HEK293T (cell line): ENCODE measurements at regions of chr7 and their contacts with region 1.

Region 1: DNA sequence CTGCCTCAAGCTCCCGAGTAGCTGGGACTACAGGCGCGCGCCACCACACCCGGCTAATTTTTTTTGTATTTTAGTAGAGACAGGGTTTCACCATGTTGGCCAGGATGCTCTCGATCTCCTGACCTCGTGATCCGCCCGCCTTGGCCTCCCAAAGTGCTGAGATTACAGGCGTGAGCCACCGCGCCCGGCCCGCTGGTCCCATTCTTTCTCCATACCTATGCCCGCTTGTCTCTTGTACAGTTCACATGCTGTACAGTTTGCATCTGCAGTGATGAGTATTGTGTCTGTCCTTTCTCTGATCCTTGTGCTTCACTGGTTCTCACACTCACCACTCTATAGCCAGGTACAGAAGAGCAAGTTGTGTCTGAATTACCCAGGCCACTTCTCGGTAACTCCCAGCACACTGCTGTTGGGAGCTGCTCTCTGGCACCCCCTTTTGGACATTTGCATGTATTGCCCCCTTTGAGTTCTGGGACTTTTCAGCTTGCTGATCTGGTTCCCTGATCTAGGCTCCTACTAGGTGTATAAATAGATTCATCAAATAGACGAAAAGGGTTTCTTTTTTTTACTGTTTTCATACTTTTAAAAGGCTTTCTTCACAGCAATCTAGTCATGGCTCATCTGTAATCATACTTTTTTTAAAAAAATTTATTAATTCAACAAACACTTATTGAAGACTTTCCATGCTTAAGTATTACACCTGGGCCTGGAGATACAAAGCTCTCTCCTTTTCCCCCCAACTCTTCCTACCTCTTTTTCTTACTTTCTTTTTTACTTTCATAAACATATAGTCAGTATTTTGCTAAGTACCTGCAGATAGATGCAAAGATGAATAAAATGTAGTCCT is 53.5 kb downstream of the AOAH start:
- DNase-seq: peak; percentile 73

Region 2: GRCh38 chr7:36487756-36488336 is 183.0 kb before region 1 on chr7:
- CTCF ChIA-PET with region 1: interaction called, 13 read pairs
- POLR2A ChIA-PET with region 1: no interaction called
- DNase-seq: peak; percentile 52

Region 3: DNA sequence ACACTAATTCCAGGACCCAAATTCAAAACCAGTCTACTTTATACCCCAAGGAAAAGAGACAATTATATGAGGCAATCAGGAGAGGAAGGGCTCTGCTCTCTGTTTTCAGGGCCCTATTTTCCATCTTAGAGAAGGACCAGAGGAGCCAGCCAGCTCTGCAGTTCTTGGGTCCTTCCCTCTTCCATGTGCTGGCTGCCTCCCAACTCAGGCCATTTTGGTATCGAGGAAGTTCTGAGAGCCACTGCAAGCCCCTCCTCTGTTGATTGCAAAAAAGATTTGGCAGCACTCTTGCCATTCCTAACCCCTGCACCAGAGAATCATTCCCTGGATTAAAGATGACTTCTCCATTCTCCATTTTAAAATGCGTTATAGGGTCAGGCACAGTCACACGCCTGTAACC is 97.7 kb before region 1 on chr7:
- CTCF ChIA-PET with region 1: no interaction called
- POLR2A ChIA-PET with region 1: no interaction called
- DNase-seq: no peak

Region 4: GRCh38 chr7:36659172-36659516 is 11.7 kb before region 1 on chr7:
- CTCF ChIA-PET with region 1: interaction called, 12 read pairs
- POLR2A ChIA-PET with region 1: no interaction called
- DNase-seq: no peak

Region 5: DNA sequence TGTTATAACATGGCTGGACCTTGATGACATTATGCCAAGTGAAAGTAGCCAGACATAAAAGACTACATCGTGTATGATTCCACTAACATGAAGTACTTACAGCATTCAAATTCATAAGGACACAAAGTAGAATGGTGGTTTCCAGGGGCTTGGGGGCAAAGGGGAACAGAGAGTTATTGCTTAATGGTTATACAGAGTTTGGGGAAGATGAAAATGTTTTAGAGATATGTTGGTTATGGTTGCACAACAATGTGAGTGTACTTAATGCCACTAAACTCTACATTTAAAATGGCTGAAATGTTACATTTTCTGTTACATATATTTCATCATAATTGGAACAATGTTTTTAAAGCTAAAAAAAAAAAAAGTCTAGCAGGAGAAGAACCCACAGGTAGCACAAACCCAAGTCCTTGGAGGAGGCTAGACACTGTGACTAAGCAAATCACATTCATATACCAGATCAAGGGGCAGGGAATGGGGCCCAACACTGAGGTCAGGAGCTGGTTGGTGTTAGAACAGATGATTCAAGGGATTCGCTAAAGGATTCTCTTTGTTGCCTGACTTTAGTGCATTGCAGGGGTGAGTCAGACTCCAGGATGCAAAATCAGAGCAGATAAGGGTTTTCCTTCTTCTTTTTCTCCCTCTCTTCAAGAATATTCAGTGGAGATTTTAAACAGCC is 78.6 kb after region 1 on chr7:
- CTCF ChIA-PET with region 1: no interaction called
- POLR2A ChIA-PET with region 1: no interaction called
- DNase-seq: no peak